ENCODE measurements at regions of chr15 and their contacts with region 1.

Region 1: GRCh38 chr15:98518823-98519561 is 129.3 kb upstream of the IGF1R start:
- DNase-seq: peak in 3 of 5 donors; percentile 41 to 54 (median 50)
- ATAC-seq: peak in 3 of 4 donors; percentile 73 to 82 (median 82)
- H3K4me3 ChIP-seq: no peak overlapping the region
- H3K27ac ChIP-seq: no peak overlapping the region
- H3K4me1 ChIP-seq: peaks cover 0 to 8% (median under 1%) of the 10 kb centered on the region in 12 donors
- H3K27me3 ChIP-seq: peaks cover 0 to 8% (median 0%) of the 10 kb centered on the region in 9 donors
- CTCF ChIP-seq: peak; percentile 62 to 89 (median 82)
- POLR2A ChIP-seq: no peak

Region 2: GRCh38 chr15:98658831-98659699 is 140.1 kb after region 1 on chr15:
- intact Hi-C with region 1: loop called in 3 of 10 experiments (anchors 5 kb)
- DNase-seq: peak in 1 of 5 donors; percentile 40
- ATAC-seq: peak; percentile 43 to 80 (median 72)
- H3K4me3 ChIP-seq: no peak overlapping the region
- H3K27ac ChIP-seq: peak overlapping the region in 1 of 12 donors; percentile 23
- H3K4me1 ChIP-seq: peaks cover 0 to 84% (median 46%) of the 10 kb centered on the region in 12 donors
- H3K27me3 ChIP-seq: no peaks in the 10 kb centered on the region
- CTCF ChIP-seq: peak; percentile 75 to 90 (median 82)
- POLR2A ChIP-seq: no peak

Region 3: GRCh38 chr15:98845107-98845884 is 326.3 kb after region 1 on chr15:
- intact Hi-C with region 1: loop called in 3 of 10 experiments (anchors 5 to 10 kb)
- DNase-seq: no peak
- ATAC-seq: peak in 2 of 4 donors; percentile 15 to 29
- H3K4me3 ChIP-seq: no peak overlapping the region
- H3K27ac ChIP-seq: no peak overlapping the region
- H3K4me1 ChIP-seq: peaks cover 0 to 59% (median 30%) of the 10 kb centered on the region in 12 donors
- H3K27me3 ChIP-seq: no peaks in the 10 kb centered on the region
- CTCF ChIP-seq: no peak
- POLR2A ChIP-seq: no peak

Region 4: DNA sequence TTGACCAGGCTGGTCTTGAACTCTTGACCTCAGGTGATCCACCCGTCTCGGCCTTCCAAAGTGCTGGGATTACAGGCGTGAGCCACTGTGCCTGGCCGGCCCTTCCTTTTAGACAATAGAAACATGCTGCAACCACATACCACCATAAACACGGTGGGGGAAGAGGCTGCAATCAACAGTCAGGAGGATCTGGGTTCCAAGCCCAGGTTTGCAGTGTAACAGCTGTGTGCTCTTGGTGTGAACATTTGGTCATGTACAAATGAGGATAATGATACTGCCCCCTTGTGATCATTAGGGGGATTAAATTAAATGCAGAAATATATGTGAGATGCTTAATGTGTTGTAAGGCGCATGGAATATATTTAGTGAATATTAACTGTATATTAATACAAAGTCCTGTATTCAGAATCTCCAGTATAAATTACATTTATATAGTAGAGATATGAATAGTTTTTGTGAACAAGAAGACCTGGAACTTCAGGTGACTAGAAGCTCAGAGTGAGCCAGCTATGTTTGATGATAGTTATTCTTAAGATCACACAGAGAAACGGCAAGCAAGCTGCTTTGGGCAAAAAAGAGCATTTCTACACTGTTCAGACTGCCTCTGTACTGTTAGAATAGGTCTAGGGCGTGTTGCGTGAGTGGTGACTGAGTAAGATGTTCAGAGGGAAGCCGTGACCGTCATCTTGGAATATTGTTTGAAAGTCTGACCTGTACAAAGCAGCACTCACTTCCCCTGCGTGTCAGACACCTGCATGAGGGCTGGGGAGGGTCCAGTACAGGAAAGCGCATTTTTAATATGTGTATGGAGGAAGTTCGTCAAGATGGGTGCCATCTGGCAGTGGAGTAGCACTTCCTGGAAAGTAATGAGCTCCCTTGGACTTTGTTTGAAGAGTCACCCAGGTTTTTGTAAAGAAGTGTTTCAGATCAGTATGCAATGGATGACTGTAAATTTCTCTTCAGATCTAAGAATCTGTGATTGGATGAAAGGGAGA is 362.8 kb after region 1 on chr15:
- intact Hi-C with region 1: loop called in 2 of 10 experiments (anchors 5 to 10 kb)
- DNase-seq: no peak
- ATAC-seq: peak in 2 of 4 donors; percentile 37 to 40
- H3K4me3 ChIP-seq: no peak overlapping the region
- H3K27ac ChIP-seq: no peak overlapping the region
- H3K4me1 ChIP-seq: peaks cover 0 to 82% (median 44%) of the 10 kb centered on the region in 12 donors
- H3K27me3 ChIP-seq: no peaks in the 10 kb centered on the region
- CTCF ChIP-seq: peak; percentile 47 to 71 (median 60)
- POLR2A ChIP-seq: no peak

Region 5: DNA sequence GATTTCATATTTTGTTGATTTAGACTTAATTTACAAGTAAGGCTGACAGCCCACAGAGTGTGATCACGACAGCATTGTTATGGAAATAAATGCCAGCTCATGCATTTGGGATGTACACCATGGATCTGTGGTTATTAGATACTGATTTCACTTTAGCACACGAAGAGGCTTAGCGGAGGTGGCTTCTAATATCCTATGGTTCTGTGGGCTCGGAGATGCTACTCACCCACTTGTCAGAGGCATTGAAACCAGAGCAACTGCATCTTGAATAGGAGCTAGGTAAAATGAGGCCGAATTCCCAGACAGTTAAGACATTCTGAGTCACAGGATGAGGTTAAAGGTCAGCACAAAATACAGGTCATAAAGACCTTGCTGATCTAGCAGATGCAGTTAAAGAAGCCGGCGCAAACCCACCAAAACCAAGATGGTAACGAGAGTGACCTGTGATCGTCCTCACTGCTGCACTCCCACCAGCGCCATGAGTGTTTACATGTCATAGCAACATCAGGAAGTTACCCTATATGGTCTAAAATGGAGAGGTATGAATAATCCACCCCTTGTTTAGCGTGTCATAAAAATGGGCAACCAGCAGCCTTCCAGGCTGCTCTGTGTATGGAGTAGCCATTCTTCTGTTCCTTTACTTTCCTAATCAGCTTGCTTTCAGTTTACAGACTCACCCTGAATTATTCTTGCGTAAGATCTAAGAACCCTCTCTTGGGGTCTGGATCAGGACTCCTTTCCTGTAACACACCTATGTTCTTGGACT is 371.1 kb after region 1 on chr15:
- intact Hi-C with region 1: loop called in 2 of 10 experiments (anchors 5 to 10 kb)
- DNase-seq: no peak
- ATAC-seq: peak in 1 of 4 donors; percentile 27
- H3K4me3 ChIP-seq: no peak overlapping the region
- H3K27ac ChIP-seq: no peak overlapping the region
- H3K4me1 ChIP-seq: peaks cover 0 to 20% (median 4%) of the 10 kb centered on the region in 12 donors
- H3K27me3 ChIP-seq: no peaks in the 10 kb centered on the region
- CTCF ChIP-seq: no peak
- POLR2A ChIP-seq: no peak

Region 6: DNA sequence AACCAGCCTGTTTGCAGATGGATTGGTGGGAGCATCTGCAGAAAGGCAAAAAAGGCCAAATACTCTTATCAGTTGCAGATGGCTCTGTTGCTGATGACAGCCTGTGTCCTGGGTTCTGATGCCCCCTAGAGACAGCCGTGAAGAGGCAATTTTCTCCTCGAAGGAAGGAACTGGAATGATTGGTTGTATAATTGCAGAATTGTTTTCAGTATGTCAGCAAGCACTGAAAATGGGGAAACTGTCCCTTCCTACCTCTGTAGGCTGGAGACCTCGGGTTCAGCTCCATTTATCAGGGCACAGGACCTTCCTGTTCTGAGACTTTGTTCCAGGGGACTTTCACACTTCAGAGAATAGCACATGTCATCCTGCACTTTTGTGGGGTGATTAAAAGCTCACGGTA is 385.6 kb after region 1 on chr15:
- intact Hi-C with region 1: loop called in 2 of 10 experiments (anchors 5 to 10 kb)
- DNase-seq: no peak
- ATAC-seq: peak in 3 of 4 donors; percentile 3 to 41 (median 36)
- H3K4me3 ChIP-seq: no peak overlapping the region
- H3K27ac ChIP-seq: peak overlapping the region in 1 of 12 donors; percentile 5
- H3K4me1 ChIP-seq: peaks cover 0 to 46% (median 25%) of the 10 kb centered on the region in 12 donors
- H3K27me3 ChIP-seq: no peaks in the 10 kb centered on the region
- CTCF ChIP-seq: peak in 10 of 12 donors; percentile 22 to 59 (median 45)
- POLR2A ChIP-seq: no peak

Region 7: GRCh38 chr15:99076552-99077308 is 557.7 kb after region 1 on chr15:
- intact Hi-C with region 1: loop called (anchors 1 to 5 kb)
- DNase-seq: peak in 4 of 5 donors; percentile 60 to 69 (median 64)
- ATAC-seq: peak; percentile 71 to 91 (median 86)
- H3K4me3 ChIP-seq: peak overlapping the region in 10 of 12 donors; percentile 25 to 54 (median 42)
- H3K27ac ChIP-seq: peak overlapping the region in 1 of 12 donors; percentile 47
- H3K4me1 ChIP-seq: peaks cover 0 to 4% (median 0%) of the 10 kb centered on the region in 12 donors
- H3K27me3 ChIP-seq: no peaks in the 10 kb centered on the region
- CTCF ChIP-seq: peak; percentile 76 to 93 (median 86)
- POLR2A ChIP-seq: no peak

Measured in heart left ventricle (tissue), 16 donors.